Naive thymus-derived CD8-positive, alpha-beta T cell (primary cell): ENCODE measurements at regions of chr3 and their contacts with region 1.

Region 1: GRCh38 chr3:177197041-177197727 is at the start of gene TBL1XR1:
- DNase-seq: peak; percentile 82 to 95 (median 90)
- ATAC-seq: peak; percentile 61 to 67
- H3K4me3 Mint-ChIP-seq: peak within 1 kb of the TSS; percentile 91 to 99 (median 98)
- H3K27ac Mint-ChIP-seq: peak within 1 kb of the TSS; percentile 93 to 99 (median 98)
- H3K4me1 Mint-ChIP-seq: peaks cover 20 to 71% (median 59%) of the 10 kb centered on the region in 4 donors
- H3K27me3 Mint-ChIP-seq: peaks cover 0 to 4% (median 0%) of the 10 kb centered on the region in 5 donors
- polyA plus RNA-seq, gene TBL1XR1: 23.4 to 34.7 (median 33.7) TPM

Region 2: GRCh38 chr3:177050501-177051237 is 146.5 kb before region 1 on chr3:
- POLR2A ChIA-PET with region 1: interaction called, 27 read pairs
- DNase-seq: peak in 4 of 10 donors; percentile 14 to 66 (median 59)
- ATAC-seq: peak; percentile 83 to 84
- H3K4me3 Mint-ChIP-seq: no peak overlapping the region
- H3K27ac Mint-ChIP-seq: peak overlapping the region in 5 of 10 donors; percentile 19 to 68 (median 55)
- H3K4me1 Mint-ChIP-seq: peaks cover 8 to 18% (median 14%) of the 10 kb centered on the region in 4 donors
- H3K27me3 Mint-ChIP-seq: no peaks in the 10 kb centered on the region

Region 3: DNA sequence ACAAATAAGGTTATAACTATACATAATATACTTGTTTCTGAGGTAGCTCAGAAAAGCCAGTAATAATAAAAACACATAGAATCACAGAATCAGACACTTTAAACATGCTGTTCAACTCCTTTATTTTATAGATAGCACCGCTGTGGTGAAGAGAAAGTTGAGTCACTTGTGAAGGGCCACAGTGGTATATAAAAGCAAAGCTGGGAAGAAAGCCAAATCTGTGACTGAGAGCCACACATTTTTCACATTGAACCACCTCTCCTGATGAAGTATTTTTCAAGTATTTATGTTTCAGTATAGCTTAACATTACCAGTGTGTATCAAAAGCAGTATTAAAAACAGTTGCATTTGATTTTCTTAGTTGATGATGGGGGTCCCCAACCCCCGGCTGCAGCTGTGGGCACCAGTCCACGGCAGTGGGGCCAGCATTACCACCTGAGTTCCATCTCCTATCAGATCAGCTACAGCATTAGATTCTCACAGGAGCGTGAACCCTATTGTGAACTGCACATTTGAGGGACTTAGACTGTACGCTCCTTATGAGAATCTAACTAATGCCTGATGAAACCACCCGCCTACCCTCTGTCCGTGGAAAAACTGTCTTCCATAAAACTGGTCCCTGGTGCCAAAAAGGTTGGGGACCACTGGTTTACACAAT is 46.1 kb before region 1 on chr3:
- POLR2A ChIA-PET with region 1: interaction called, 11 read pairs
- DNase-seq: peak in 4 of 10 donors; percentile 22 to 47 (median 30)
- ATAC-seq: peak; percentile 83 to 89
- H3K4me3 Mint-ChIP-seq: peak overlapping the region in 9 of 10 donors; percentile 16 to 76 (median 60)
- H3K27ac Mint-ChIP-seq: peak overlapping the region in 9 of 10 donors; percentile 36 to 89 (median 71)
- H3K4me1 Mint-ChIP-seq: peaks cover 20 to 77% (median 67%) of the 10 kb centered on the region in 4 donors
- H3K27me3 Mint-ChIP-seq: no peaks in the 10 kb centered on the region